A673 (cell line): ENCODE measurements at regions of chr3 and their contacts with region 1.

Region 1: DNA sequence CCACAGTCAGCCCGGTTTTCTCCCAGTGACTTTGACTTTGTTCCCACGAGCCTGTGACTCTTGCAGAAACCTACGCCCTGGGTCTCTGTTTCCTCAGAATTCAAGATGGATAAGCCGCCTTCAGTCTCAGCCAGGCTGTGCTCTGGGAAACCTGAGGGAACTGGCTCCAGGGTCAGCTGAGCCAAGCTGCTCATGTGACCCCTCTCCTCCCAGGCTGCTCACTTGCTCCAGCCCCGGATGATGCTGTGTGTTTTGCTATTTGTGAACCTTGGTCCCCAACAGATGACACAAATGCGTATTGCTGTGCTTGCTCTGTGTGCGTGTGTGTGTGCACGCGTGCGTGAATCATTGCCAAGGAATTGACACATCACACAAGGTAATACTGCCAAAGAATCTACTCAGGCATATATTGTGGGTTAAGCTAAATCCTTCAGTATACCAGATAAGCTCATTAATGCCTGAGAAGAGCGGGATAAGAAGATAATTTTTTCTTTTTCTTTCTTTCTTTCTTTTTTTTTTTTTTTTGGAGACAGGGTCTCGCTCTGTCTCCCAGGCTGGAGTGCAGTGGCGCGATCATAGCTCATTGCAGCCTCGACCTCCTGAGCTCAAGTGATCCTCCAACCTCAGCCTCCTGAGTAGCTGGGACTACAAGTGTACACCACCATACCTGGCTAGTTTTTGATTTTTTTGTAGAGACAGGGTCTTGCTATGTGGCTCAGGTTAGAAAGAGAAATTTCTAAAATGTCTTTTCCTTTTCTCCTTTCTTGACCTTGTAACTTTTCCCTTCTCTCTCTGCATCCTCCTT is 29.2 kb upstream of the UMPS start:
- DNase-seq: no peak
- H3K4me3 ChIP-seq: no peak overlapping the region
- H3K27ac ChIP-seq: peak overlapping the region; percentile 95
- H3K4me1 ChIP-seq: peaks cover 33% of the 10 kb centered on the region
- H3K27me3 ChIP-seq: no peaks in the 10 kb centered on the region
- CTCF ChIP-seq: no peak

Region 2: DNA sequence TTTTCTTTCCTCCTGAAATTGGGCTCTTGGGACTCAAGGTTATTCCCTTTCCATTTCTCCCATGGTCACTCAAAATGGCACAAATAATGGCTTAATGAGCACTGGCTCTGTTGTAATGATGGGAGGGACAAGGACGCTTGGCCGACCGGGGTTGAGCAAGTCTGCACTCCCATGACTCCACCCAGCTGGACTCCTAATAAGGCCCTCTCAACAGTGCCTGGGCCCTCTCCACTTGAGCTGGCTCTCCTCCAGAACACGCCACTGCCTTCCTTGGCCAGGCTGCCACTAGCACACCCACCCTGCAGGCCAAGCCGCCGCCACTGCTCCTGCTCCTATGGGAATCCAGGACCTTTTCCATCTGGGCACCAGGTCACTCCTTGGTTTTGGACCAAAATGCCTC is 1294.5 kb before region 1 on chr3:
- CTCF ChIA-PET with region 1: interaction called, 14 read pairs
- POLR2A ChIA-PET with region 1: no interaction called
- intact Hi-C with region 1: no loop called
- DNase-seq: no peak
- H3K4me3 ChIP-seq: no peak overlapping the region
- H3K27ac ChIP-seq: no peak overlapping the region
- H3K4me1 ChIP-seq: no peaks in the 10 kb centered on the region
- H3K27me3 ChIP-seq: no peaks in the 10 kb centered on the region
- CTCF ChIP-seq: no peak

Region 3: GRCh38 chr3:124363476-124363875 is 337.6 kb before region 1 on chr3:
- CTCF ChIA-PET with region 1: no interaction called
- POLR2A ChIA-PET with region 1: no interaction called
- intact Hi-C with region 1: no loop called
- DNase-seq: peak; percentile 26
- H3K4me3 ChIP-seq: no peak overlapping the region
- H3K27ac ChIP-seq: no peak overlapping the region
- H3K4me1 ChIP-seq: no peaks in the 10 kb centered on the region
- H3K27me3 ChIP-seq: no peaks in the 10 kb centered on the region
- CTCF ChIP-seq: no peak

Region 4: GRCh38 chr3:124565537-124565936 is 135.5 kb before region 1 on chr3:
- CTCF ChIA-PET with region 1: interaction called, 12 read pairs
- POLR2A ChIA-PET with region 1: no interaction called
- intact Hi-C with region 1: no loop called
- DNase-seq: no peak
- H3K4me3 ChIP-seq: no peak overlapping the region
- H3K27ac ChIP-seq: peak overlapping the region; percentile 45
- H3K4me1 ChIP-seq: peaks cover 25% of the 10 kb centered on the region
- H3K27me3 ChIP-seq: no peaks in the 10 kb centered on the region
- CTCF ChIP-seq: no peak